ENCODE measurements at regions of chr5 and their contacts with region 1.

Region 1: DNA sequence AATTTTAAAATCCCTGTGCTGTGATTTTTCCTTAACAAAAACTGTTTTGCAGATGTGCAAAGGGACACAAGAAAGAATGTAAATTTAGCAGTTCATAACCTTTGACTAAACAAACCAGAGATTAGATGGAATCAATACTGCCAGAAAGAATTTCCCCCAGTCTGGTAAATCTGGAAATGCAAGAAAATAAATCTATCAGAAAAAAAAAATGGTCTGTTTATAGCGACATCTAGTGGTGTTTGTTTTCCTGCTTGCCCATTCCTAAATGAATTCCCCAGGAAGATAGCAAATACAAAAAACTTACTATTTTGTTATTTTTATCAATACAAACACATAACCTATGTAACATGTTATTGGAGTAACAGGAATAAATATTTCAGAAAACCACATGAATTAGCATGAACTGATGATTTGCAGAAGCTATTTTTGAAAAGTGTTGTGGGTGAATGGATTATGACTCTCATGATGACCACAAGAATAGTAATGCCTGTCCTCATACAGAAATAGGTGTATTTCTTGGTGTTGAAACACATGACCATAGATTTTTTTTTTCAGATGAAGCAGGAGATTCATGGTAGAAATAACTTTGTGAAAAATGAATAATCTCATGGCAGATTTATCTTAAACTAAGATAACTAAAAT is 1703.8 kb downstream of the MAT2B start:
- DNase-seq: no peak
- H3K4me3 Mint-ChIP-seq: no peak overlapping the region
- H3K27ac Mint-ChIP-seq: no peak overlapping the region
- H3K4me1 Mint-ChIP-seq: no peaks in the 10 kb centered on the region
- H3K27me3 Mint-ChIP-seq: no peaks in the 10 kb centered on the region

Region 2: GRCh38 chr5:163564321-163564938 is 1644.8 kb before region 1 on chr5:
- intact Hi-C with region 1: loop called (anchors 1 kb)
- DNase-seq: peak; percentile 90
- H3K4me3 Mint-ChIP-seq: no peak overlapping the region
- H3K27ac Mint-ChIP-seq: no peak overlapping the region
- H3K4me1 Mint-ChIP-seq: peaks cover 20% of the 10 kb centered on the region
- H3K27me3 Mint-ChIP-seq: peaks cover 64% of the 10 kb centered on the region